ENCODE measurements at regions of chr5 and their contacts with region 1.

Region 1: DNA sequence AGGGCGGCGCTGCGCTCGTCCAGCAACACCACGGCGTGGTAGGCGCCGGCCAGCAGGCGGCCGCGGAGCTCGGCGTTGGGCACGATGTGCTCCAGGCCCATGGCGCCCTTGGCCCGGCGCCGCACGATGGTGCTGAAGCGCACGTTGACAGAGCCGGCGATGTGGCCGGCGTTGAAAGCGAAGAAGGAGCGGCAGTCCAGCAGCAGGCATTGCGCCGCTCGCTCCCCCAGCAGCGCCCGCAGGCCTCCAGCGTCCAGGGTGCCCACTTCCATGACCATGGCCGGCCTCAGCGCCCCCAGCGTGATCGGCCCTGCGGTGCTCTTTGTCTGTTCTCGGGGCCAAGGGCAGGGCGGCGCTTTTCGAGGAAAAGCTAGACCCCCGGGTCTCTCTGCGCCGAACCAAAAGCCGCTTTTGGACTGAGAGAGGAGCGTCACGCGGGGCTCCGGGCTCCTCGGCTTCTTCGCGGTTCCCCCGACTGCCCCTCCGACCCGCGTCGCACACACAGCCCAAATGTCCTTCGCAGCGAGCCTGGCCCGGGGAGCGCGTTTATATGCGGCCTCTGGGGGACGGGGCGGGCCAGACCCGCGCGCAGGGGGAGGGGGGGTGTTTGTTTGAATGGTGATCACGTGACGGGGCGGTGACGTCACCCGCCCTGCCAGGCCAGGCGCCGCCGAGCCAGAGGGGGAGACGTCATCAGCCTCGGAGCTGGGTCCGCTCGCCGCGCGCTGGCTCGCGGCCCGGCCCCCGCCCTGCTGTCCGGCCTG is at the start of gene DUSP1:
- DNase-seq: peak; percentile 89
- ATAC-seq: peak; percentile 74
- H3K4me3 ChIP-seq: peak within 1 kb of the TSS; percentile 79 to 84
- H3K27ac ChIP-seq: peak within 1 kb of the TSS; percentile 86
- H3K4me1 ChIP-seq: peaks cover 27 to 44% of the 10 kb centered on the region in 2 experiments
- H3K27me3 ChIP-seq: no peaks in the 10 kb centered on the region
- CTCF ChIP-seq: peak in 2 of 3 experiments; percentile 35 to 39; a peak in 2 of 6 replicates
- POLR2A ChIP-seq: peak; percentile 97
- RAD21 ChIP-seq: no peak
- total RNA-seq, gene DUSP1: 16.6 TPM

Region 2: DNA sequence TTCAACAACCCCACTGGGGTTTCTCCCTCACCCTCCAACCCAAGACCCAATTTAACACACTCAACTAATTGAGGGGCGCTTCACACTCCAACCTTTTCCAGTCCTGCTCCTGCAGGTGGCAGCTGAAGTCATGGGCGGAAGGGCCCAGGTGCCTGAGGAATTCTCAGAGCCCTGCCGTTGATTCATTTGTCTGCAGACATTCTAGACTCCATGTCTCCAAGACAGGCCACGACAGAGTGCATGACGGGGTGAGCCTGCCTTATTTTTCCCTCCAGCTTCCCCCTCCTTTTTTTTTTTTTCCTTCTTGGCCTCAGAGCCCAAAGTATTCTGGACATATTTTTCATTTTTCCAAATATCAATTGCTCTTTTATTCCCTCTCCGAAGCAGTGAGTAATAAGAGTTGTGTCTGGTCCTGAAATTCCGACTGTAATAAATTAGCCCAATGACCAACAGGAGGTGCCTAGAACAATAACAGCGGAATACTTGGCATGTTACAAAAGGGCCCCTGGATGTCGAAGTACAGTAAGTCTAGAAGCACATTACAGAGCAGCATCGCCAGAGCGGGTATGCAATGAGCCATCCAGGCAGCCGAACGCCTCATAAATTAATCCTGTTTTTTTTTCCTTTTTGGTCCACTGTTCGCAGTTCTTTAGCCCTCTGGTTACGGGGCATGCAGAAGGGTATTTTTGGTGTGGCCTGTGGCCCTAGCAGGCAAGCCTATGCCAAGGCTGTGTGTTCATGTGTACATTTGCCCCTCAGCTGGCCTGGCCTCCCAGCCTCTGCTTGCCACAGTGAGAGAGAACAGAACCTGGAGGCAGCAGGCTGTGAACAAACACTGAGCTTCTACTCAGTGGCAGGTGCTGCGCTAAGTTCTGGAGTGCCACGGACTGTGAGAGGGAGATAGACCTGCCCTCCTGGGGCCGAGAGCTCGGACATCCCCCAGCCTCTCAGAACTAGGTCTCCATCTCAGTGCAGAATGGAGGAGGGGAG is 993.8 kb before region 1 on chr5:
- CTCF ChIA-PET with region 1: no interaction called
- POLR2A ChIA-PET with region 1: no interaction called
- RAD21 ChIA-PET with region 1: no interaction called
- intact Hi-C with region 1: no loop called
- DNase-seq: no peak
- ATAC-seq: no peak
- H3K4me3 ChIP-seq: no peak overlapping the region
- H3K27ac ChIP-seq: no peak overlapping the region
- H3K4me1 ChIP-seq: no peaks in the 10 kb centered on the region
- H3K27me3 ChIP-seq: no peaks in the 10 kb centered on the region
- CTCF ChIP-seq: no peak
- POLR2A ChIP-seq: no peak
- RAD21 ChIP-seq: no peak

Region 3: DNA sequence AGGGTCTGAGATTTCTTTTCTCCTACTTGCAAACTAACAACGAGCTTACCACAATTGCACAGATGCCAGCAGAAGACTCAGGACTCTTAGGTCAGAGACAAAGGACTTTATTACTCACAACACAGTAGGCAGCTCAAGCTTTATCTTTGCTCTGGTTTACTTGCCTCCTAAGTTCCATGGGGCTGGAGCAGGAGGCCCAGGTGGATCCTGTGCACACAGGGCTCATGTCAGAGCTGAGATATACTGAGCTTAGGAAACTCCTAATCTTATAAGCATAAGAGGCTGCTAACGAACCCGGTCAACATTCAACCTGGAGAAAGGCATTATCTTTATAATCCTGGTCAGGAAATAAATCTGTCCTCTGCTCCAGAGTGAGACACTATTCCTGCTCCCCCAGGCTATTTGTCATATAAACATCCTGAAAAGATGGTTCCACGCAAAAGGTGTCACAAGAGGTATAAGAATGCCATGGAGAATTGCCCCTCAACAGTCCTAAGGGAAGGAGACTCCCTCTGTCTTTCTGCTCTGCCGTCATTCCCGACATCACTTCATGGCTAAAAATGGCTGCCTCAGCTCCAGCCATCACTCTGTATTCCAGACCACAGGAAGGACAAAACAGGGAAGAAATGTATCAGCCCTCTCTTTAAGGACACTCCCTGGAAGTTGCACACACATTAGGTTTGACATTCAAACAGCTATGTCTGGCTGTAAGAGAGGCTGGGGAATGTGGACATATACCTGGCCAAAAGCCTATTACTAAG is 16.1 kb before region 1 on chr5:
- CTCF ChIA-PET with region 1: no interaction called
- POLR2A ChIA-PET with region 1: interaction called, 19 read pairs
- RAD21 ChIA-PET with region 1: no interaction called
- intact Hi-C with region 1: no loop called
- DNase-seq: no peak
- ATAC-seq: no peak
- H3K4me3 ChIP-seq: no peak overlapping the region
- H3K27ac ChIP-seq: no peak overlapping the region
- H3K4me1 ChIP-seq: no peaks in the 10 kb centered on the region
- H3K27me3 ChIP-seq: no peaks in the 10 kb centered on the region
- CTCF ChIP-seq: no peak
- POLR2A ChIP-seq: no peak
- RAD21 ChIP-seq: no peak

Region 4: GRCh38 chr5:172798422-172799200 is 27.8 kb after region 1 on chr5:
- CTCF ChIA-PET with region 1: interaction called, 3 read pairs
- POLR2A ChIA-PET with region 1: interaction called, 10 read pairs
- RAD21 ChIA-PET with region 1: no interaction called
- intact Hi-C with region 1: no loop called
- DNase-seq: no peak
- ATAC-seq: no peak
- H3K4me3 ChIP-seq: no peak overlapping the region
- H3K27ac ChIP-seq: no peak overlapping the region
- H3K4me1 ChIP-seq: peaks cover 7 to 60% of the 10 kb centered on the region in 2 experiments; a peak in 3 of 4 replicates
- H3K27me3 ChIP-seq: no peaks in the 10 kb centered on the region
- CTCF ChIP-seq: no peak
- POLR2A ChIP-seq: no peak
- RAD21 ChIP-seq: no peak

Region 5: DNA sequence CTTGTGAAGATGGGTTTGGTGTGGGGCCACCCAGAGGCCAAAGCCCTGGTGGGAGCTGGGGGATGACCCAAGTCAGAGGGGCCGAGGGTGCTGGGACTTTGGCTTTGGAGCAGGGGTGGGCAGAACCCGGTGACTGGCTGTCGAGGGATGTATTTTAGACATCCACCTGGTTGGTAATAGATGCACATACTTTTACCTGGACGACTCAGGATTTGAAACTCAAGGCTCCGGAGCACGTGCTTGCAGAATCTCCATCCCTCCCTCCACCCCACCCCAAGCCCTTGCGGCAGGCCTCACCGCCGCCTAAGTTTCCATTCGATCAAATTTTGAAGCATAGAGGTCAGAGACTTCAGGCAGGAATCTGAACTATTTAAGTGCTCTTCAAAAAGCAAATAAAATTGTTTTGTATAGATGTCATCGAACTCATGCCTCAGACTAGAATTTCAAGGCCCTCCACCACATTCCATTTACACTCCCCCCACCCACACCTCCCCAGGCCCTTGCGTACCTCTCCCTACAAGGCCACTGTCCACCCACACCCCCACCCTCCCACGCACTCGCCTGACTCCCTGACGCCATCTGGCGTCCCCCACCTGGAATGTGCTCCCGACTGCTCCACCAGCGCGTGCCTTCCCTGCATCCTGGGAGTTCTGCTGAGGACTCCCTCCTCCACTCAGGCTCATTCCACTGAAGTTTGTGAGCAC is 131.8 kb after region 1 on chr5:
- CTCF ChIA-PET with region 1: interaction called, 15 read pairs
- POLR2A ChIA-PET with region 1: interaction called, 20 read pairs
- RAD21 ChIA-PET with region 1: no interaction called
- intact Hi-C with region 1: loop called (anchors 2 kb)
- DNase-seq: peak; percentile 8
- ATAC-seq: peak; percentile 83
- H3K4me3 ChIP-seq: no peak overlapping the region
- H3K27ac ChIP-seq: no peak overlapping the region
- H3K4me1 ChIP-seq: peaks cover 12 to 35% of the 10 kb centered on the region in 2 experiments; a peak in 3 of 4 replicates
- H3K27me3 ChIP-seq: no peaks in the 10 kb centered on the region
- CTCF ChIP-seq: peak in 2 of 3 experiments; percentile 57 to 58; a peak in 4 of 6 replicates
- POLR2A ChIP-seq: no peak
- RAD21 ChIP-seq: no peak

Region 6: DNA sequence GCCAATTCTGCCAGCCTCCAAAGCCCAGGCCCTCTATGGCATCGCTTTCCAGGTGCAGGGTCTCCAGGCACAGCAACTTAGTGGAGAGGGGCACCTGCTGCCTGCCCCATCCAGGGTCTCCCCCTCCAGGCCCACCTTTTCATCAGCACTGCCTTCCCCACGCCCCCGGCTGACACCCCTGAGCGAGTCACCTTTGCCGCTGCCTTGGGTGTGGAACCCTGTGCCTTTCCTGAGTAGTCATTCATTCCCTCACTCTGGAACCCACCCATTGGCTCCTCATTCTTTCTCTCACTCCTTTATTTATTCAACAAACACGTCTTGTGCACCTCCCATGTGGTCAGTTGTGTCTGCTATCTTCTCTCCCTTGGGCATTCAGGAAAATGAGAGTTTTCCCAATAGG is 173.9 kb after region 1 on chr5:
- CTCF ChIA-PET with region 1: no interaction called
- POLR2A ChIA-PET with region 1: no interaction called
- RAD21 ChIA-PET with region 1: no interaction called
- intact Hi-C with region 1: no loop called
- DNase-seq: no peak
- ATAC-seq: no peak
- H3K4me3 ChIP-seq: no peak overlapping the region
- H3K27ac ChIP-seq: no peak overlapping the region
- H3K4me1 ChIP-seq: peaks cover 0 to 8% of the 10 kb centered on the region in 2 experiments; a peak in 1 of 4 replicates
- H3K27me3 ChIP-seq: no peaks in the 10 kb centered on the region
- CTCF ChIP-seq: no peak
- POLR2A ChIP-seq: no peak
- RAD21 ChIP-seq: no peak